Caco-2 (cell line): ENCODE measurements at regions of chr20 and their contacts with region 1.

Region 1: DNA sequence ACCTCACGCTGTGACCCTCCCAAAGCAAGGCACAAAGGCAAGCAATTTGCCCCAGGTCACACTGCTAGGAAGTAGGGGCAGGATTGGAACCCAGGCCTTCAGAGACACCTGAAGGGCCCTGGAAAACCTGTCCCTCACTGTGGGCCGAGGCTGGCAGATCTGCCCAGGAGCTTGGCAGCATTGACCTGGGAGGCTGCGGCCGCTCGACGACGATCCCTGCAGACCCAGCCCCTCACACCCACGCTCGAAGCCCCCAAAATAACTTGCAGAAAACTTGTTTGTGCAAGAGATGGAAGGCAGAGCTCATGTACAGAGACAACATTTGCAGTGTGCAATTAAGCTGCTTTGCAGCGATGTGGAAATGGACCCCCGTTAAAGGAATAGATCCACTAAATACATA is 251.4 kb downstream of the TAF4 start:
- DNase-seq: no peak
- H3K4me3 ChIP-seq: no peak overlapping the region
- H3K4me3 Mint-ChIP-seq: no peak overlapping the region
- H3K27ac Mint-ChIP-seq: no peak overlapping the region
- H3K4me1 ChIP-seq: no peaks in the 10 kb centered on the region
- H3K4me1 Mint-ChIP-seq: no peaks in the 10 kb centered on the region
- H3K27me3 ChIP-seq: peaks cover 10% of the 10 kb centered on the region
- H3K27me3 Mint-ChIP-seq: peaks cover 51% of the 10 kb centered on the region
- CTCF ChIP-seq: no peak

Region 2: GRCh38 chr20:62258499-62259293 is 444.5 kb after region 1 on chr20:
- CTCF ChIA-PET with region 1: interaction called, 10 read pairs
- POLR2A ChIA-PET with region 1: no interaction called
- intact Hi-C with region 1: no loop called
- DNase-seq: no peak
- H3K4me3 ChIP-seq: no peak overlapping the region
- H3K4me3 Mint-ChIP-seq: no peak overlapping the region
- H3K27ac Mint-ChIP-seq: no peak overlapping the region
- H3K4me1 ChIP-seq: no peaks in the 10 kb centered on the region
- H3K4me1 Mint-ChIP-seq: no peaks in the 10 kb centered on the region
- H3K27me3 ChIP-seq: no peaks in the 10 kb centered on the region
- H3K27me3 Mint-ChIP-seq: no peaks in the 10 kb centered on the region
- CTCF ChIP-seq: no peak